Right cardiac atrium (tissue), 5 donors: ENCODE measurements at regions of chr11 and their contacts with region 1.

Region 1: GRCh38 chr11:125404776-125405435 is 91.2 kb downstream of the FEZ1 start:
- DNase-seq: peak; percentile 71 to 91 (median 90)
- ATAC-seq: peak; percentile 84 to 88
- H3K4me3 ChIP-seq: no peak overlapping the region
- H3K27ac ChIP-seq: no peak overlapping the region
- H3K4me1 ChIP-seq: peaks cover 7% of the 10 kb centered on the region
- H3K27me3 ChIP-seq: no peaks in the 10 kb centered on the region

Region 2: GRCh38 chr11:124920870-124921609 is 483.9 kb before region 1 on chr11:
- intact Hi-C with region 1: no loop called
- DNase-seq: peak; percentile 87 to 94 (median 94)
- ATAC-seq: peak; percentile 78 to 90
- H3K4me3 ChIP-seq: peak overlapping the region; percentile 57
- H3K27ac ChIP-seq: peak overlapping the region; percentile 62
- H3K4me1 ChIP-seq: peaks cover 2% of the 10 kb centered on the region
- H3K27me3 ChIP-seq: no peaks in the 10 kb centered on the region

Region 3: GRCh38 chr11:124970925-124971324 is 434.0 kb before region 1 on chr11:
- intact Hi-C with region 1: no loop called
- DNase-seq: no peak
- ATAC-seq: no peak
- H3K4me3 ChIP-seq: no peak overlapping the region
- H3K27ac ChIP-seq: no peak overlapping the region
- H3K4me1 ChIP-seq: no peaks in the 10 kb centered on the region
- H3K27me3 ChIP-seq: no peaks in the 10 kb centered on the region

Region 4: DNA sequence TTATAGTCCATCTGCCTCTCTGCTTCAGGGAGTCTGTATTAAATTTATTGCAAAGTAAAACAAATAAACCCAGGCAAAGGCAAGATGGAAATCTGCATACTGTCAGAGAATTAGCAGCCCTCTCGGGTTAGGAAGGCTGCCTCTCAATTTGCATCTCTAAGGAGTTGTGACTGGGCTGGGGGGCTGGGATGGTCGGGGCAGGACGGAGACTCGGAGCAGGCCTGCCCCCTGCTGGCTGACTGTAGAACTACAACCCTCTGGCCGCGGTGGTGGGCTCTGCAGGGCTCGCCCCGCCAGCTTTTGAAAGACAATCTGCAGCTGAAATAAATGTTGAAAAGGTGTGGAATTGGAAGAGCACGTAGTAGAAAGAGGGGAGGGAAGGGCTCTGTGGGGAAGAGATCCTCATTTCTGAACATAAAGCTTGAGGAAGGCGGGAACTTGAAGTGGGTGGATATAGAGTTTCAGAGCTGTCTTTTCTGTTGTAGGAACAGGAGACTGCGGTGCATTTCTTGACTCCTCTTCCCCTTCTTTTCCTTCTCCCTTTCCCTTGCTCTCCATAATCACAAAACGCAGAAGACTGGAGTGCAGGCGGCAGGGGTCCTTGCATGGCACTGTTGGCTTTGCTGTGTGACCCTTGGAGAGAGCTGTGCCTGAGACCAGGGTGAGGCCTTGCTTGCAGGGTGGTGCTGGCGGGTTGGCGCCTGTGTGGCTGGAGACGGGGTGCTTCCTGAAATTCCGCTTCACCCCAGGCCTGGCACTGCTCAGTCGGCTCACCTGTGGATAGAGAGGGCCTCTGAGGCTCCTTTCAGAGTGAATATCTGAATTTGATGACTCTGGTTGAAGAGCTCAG is 263.0 kb before region 1 on chr11:
- intact Hi-C with region 1: loop called in 1 of 4 experiments (anchors 10 kb)
- DNase-seq: peak; percentile 40 to 74 (median 70)
- ATAC-seq: peak; percentile 70 to 85
- H3K4me3 ChIP-seq: no peak overlapping the region
- H3K27ac ChIP-seq: no peak overlapping the region
- H3K4me1 ChIP-seq: no peaks in the 10 kb centered on the region
- H3K27me3 ChIP-seq: no peaks in the 10 kb centered on the region

Region 5: GRCh38 chr11:125164422-125165110 is 240.3 kb before region 1 on chr11 and contains the start of gene PKNOX2:
- intact Hi-C with region 1: loop called in 3 of 4 experiments (anchors 10 kb)
- DNase-seq: peak; percentile 84 to 94 (median 94)
- ATAC-seq: peak; percentile 79 to 84
- H3K4me3 ChIP-seq: peak within 1 kb of the TSS; percentile 72
- H3K27ac ChIP-seq: peak within 1 kb of the TSS; percentile 86
- H3K4me1 ChIP-seq: peaks cover 3% of the 10 kb centered on the region
- H3K27me3 ChIP-seq: no peaks in the 10 kb centered on the region
- total RNA-seq, gene PKNOX2: 12.5 to 20.2 (median 18.8) TPM

Region 6: DNA sequence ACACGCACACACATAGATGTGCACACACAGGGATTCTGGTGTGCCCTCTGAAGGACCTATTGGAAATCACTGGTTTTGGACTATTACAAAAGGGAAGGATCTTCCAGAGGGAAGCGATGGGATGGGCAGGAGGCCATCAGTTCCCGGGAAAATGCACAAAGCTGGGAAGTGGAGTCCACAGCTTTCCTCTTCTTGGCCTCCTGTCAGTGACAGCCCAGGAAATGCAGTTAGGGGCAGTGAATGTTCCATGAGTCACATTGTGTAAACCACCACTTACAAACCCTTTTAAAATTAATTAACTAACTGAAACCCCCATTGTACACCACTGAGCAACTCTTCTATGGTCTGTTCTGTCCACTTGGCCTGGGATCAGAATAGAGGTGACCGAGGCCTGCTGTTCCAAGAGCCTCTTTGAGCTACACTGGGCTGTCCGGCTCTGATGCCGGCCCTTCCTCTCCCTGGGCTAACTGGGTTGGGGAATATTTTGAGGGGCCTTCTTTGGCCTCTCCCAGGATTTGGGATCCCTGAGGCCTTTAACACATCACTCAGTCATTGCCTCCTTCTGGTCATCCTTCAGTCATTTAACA is 46.6 kb before region 1 on chr11:
- intact Hi-C with region 1: loop called in 1 of 4 experiments (anchors 10 kb)
- DNase-seq: no peak
- ATAC-seq: no peak
- H3K4me3 ChIP-seq: no peak overlapping the region
- H3K27ac ChIP-seq: no peak overlapping the region
- H3K4me1 ChIP-seq: no peaks in the 10 kb centered on the region
- H3K27me3 ChIP-seq: no peaks in the 10 kb centered on the region